K562 (cell line): ENCODE measurements at regions of chr5 and their contacts with region 1.

Region 1: DNA sequence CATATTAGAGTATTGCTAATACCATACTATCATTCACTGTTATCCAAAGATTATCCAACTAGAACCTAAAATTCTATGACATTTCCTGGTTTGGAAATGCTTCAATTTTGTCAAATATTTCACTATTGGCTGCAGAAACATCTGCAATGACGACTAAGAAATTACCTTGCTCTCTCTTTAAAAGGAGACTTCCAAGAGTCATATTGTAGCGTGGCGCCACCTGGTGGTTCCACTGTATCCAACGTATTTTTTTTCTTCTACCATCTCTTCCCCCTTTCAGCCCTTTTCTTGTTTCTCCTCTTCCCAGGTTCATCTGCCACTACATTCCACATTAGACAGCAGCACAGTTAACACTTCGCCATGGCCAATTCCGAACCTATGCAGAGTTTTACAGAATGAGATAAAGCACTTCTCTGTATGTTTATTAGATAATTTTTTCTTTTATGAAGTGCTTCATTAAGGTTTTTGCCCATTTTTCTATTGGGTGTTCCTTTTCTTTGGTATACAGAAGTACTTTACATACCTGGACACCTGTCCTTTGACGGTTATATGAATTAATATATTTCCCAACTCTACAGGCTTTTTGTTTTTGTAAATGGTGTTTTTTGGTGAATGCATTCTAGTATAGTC is 153.5 kb downstream of the CDC42SE2 start:
- DNase-seq: peak; percentile 60 to 83 (median 60)
- ATAC-seq: peak; percentile 88
- H3K4me3 ChIP-seq: no peak overlapping the region
- H3K27ac ChIP-seq: no peak overlapping the region
- H3K4me1 ChIP-seq: no peaks in the 10 kb centered on the region
- H3K27me3 ChIP-seq: no peaks in the 10 kb centered on the region
- CTCF ChIP-seq: peak; percentile 63 to 85 (median 74)
- EP300 ChIP-seq: no peak
- POLR2A ChIP-seq: no peak
- RAD21 ChIP-seq: peak; percentile 77 to 87

Region 2: GRCh38 chr5:130109152-130109551 is 1308.2 kb before region 1 on chr5:
- CTCF ChIA-PET with region 1: no interaction called
- POLR2A ChIA-PET with region 1: no interaction called
- in situ Hi-C with region 1: no loop called
- intact Hi-C with region 1: loop called (anchors 5 kb)
- DNase-seq: peak in 1 of 4 experiments; percentile 4
- ATAC-seq: no peak
- H3K4me3 ChIP-seq: no peak overlapping the region
- H3K27ac ChIP-seq: no peak overlapping the region
- H3K4me1 ChIP-seq: no peaks in the 10 kb centered on the region
- H3K27me3 ChIP-seq: no peaks in the 10 kb centered on the region
- CTCF ChIP-seq: peak in 1 of 3 experiments; percentile 27; a peak in 2 of 6 replicates
- EP300 ChIP-seq: no peak
- POLR2A ChIP-seq: no peak
- RAD21 ChIP-seq: peak; percentile 34 to 50

Region 3: GRCh38 chr5:131005963-131006684 is 411.2 kb before region 1 on chr5:
- CTCF ChIA-PET with region 1: no interaction called
- POLR2A ChIA-PET with region 1: no interaction called
- in situ Hi-C with region 1: no loop called
- intact Hi-C with region 1: loop called (anchors 10 kb)
- DNase-seq: no peak
- ATAC-seq: peak; percentile 37; the same call in 1 of the 3 replicates
- H3K4me3 ChIP-seq: no peak overlapping the region
- H3K27ac ChIP-seq: no peak overlapping the region
- H3K4me1 ChIP-seq: 0 out of 5 replicates have a peak, but pooled peaks cover 0 to 3% of the 10 kb centered on the region in 2 experiments
- H3K27me3 ChIP-seq: peaks cover 2 to 6% of the 10 kb centered on the region in 2 experiments; a peak in 2 of 5 replicates
- CTCF ChIP-seq: peak in 2 of 3 experiments; percentile 12 to 24; a peak in 1 of 6 replicates
- EP300 ChIP-seq: no peak
- POLR2A ChIP-seq: no peak
- RAD21 ChIP-seq: peak in 1 of 2 experiments; percentile 35; a peak in 2 of 4 replicates